Activated CD4-positive, alpha-beta memory T cell treated with anti-CD3 and anti-CD28 coated beads, Interleukin-2, amount 10 ng/mL, durations not matched to agents 7 days and 5 days (primary cell): ENCODE measurements at regions of chr10 and their contacts with region 1.

Region 1: GRCh38 chr10:30529373-30529998 is 95.5 kb downstream of the MAP3K8 start:
- DNase-seq: peak; percentile 90
- H3K4me3 Mint-ChIP-seq: peak overlapping the region; percentile 71
- H3K27ac Mint-ChIP-seq: peak overlapping the region; percentile 97
- H3K4me1 Mint-ChIP-seq: peaks cover 76% of the 10 kb centered on the region
- H3K27me3 Mint-ChIP-seq: peaks cover 5% of the 10 kb centered on the region

Region 2: GRCh38 chr10:30413996-30414576 is 115.4 kb before region 1 on chr10:
- CTCF ChIA-PET with region 1: interaction called, 39 read pairs
- POLR2A ChIA-PET with region 1: interaction called, 11 read pairs
- DNase-seq: no peak
- H3K4me3 Mint-ChIP-seq: no peak overlapping the region
- H3K27ac Mint-ChIP-seq: no peak overlapping the region
- H3K4me1 Mint-ChIP-seq: peaks cover 42% of the 10 kb centered on the region
- H3K27me3 Mint-ChIP-seq: no peaks in the 10 kb centered on the region

Region 3: GRCh38 chr10:30456266-30456665 is 73.2 kb before region 1 on chr10:
- CTCF ChIA-PET with region 1: interaction called, 6 read pairs
- POLR2A ChIA-PET with region 1: interaction called, 22 read pairs
- DNase-seq: peak; percentile 63
- H3K4me3 Mint-ChIP-seq: peak overlapping the region; percentile 54
- H3K27ac Mint-ChIP-seq: peak overlapping the region; percentile 52
- H3K4me1 Mint-ChIP-seq: peaks cover 37% of the 10 kb centered on the region
- H3K27me3 Mint-ChIP-seq: no peaks in the 10 kb centered on the region

Region 4: GRCh38 chr10:30493609-30494530 is 35.6 kb before region 1 on chr10:
- CTCF ChIA-PET with region 1: interaction called, 4 read pairs
- POLR2A ChIA-PET with region 1: interaction called, 12 read pairs
- DNase-seq: no peak
- H3K4me3 Mint-ChIP-seq: no peak overlapping the region
- H3K27ac Mint-ChIP-seq: no peak overlapping the region
- H3K4me1 Mint-ChIP-seq: peaks cover 69% of the 10 kb centered on the region
- H3K27me3 Mint-ChIP-seq: peaks cover 12% of the 10 kb centered on the region

Region 5: DNA sequence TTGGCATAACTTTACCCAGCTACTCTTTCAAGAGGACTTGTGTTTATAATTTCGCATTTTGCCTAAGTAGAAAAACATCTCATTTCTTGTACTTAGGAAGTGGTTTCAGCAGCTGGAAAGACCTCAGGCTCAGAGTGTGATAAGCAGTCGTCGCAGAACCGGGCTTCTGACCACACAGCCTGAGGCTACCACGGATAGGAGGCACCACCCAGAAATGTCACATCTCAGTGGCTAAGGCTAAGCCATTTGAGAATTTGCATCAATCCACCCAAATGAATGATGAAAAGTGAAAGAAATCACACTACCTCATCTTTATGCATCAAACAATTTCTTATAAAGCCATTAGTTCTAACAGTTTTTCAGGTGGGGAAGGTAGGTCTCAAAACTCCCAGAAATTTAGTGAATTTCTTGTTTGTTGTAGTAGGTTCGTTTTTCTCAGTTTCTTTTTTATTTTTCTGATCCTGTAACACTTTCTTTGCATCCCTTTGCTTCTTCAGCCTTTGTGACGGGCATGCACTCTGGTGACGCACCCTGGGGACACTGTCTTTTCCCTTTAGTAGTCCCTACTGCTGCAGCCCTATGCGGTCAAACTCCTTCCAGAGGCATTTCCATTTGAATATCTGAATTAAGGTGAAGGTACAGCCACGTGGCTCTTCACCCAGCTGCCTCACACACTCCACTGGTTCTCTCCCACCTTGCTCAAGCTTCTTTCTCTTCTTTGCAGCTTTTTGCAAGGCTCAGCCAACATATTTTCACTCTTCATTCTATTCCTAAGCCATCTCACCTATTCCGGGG is 27.0 kb before region 1 on chr10:
- CTCF ChIA-PET with region 1: interaction called, 4 read pairs
- POLR2A ChIA-PET with region 1: interaction called, 32 read pairs
- DNase-seq: peak; percentile 83
- H3K4me3 Mint-ChIP-seq: peak overlapping the region; percentile 48
- H3K27ac Mint-ChIP-seq: peak overlapping the region; percentile 91
- H3K4me1 Mint-ChIP-seq: peaks cover 73% of the 10 kb centered on the region
- H3K27me3 Mint-ChIP-seq: no peaks in the 10 kb centered on the region

Region 6: GRCh38 chr10:30553625-30554439 is 24.3 kb after region 1 on chr10:
- CTCF ChIA-PET with region 1: no interaction called
- POLR2A ChIA-PET with region 1: no interaction called
- DNase-seq: no peak
- H3K4me3 Mint-ChIP-seq: no peak overlapping the region
- H3K27ac Mint-ChIP-seq: no peak overlapping the region
- H3K4me1 Mint-ChIP-seq: peaks cover 4% of the 10 kb centered on the region
- H3K27me3 Mint-ChIP-seq: peaks cover 4% of the 10 kb centered on the region

Region 7: GRCh38 chr10:30574432-30574796 is 44.9 kb after region 1 on chr10:
- CTCF ChIA-PET with region 1: no interaction called
- POLR2A ChIA-PET with region 1: no interaction called
- DNase-seq: no peak
- H3K4me3 Mint-ChIP-seq: no peak overlapping the region
- H3K27ac Mint-ChIP-seq: no peak overlapping the region
- H3K4me1 Mint-ChIP-seq: no peaks in the 10 kb centered on the region
- H3K27me3 Mint-ChIP-seq: peaks cover 22% of the 10 kb centered on the region